Natural killer cell (primary cell): ENCODE measurements at regions of chr18 and their contacts with region 1.

Region 1: DNA sequence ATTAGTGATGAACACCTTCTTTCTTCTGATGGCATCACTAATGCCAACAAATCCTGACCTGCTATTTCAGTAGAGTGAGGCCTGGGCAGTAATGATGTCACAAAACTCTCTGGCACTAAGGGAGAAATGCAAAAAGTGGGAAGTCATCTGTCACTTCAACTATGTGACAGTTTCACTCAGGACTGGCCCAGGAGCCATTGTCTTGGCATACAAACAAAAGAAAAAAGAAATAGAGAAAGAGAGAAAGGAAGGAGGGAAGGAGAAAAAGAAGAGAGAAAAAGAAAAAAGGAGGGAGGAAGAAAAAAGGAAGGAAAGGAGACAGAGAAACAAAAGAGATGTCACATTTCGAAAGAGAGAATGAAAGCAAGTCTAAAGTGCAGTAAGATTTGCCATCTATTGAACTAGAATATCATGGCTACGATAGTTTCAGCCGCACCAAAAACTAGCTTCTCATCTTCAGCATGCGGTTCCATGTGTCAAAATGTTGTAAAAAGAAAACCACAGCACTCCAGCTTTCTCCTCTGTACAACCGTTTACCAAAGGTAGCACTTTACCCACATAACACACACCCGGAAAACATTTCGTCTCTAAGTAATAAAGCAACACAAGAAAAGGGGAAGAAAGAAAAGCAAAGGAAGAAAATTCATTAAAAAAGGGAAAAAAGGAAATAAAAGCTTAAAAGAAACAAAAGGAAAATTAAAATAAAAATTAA is 50.1 kb downstream of the CD226 start:
- DNase-seq: peak in 1 of 2 donors; percentile 80
- ATAC-seq: peak; percentile 27 to 53 (median 46)
- H3K4me3 ChIP-seq: peak overlapping the region; percentile 33
- H3K4me3 Mint-ChIP-seq: peak overlapping the region; percentile 94
- H3K27ac ChIP-seq: peak overlapping the region; percentile 92
- H3K27ac Mint-ChIP-seq: peak overlapping the region; percentile 75 to 93
- H3K4me1 ChIP-seq: peaks cover 46% of the 10 kb centered on the region
- H3K4me1 Mint-ChIP-seq: peaks cover 62 to 76% of the 10 kb centered on the region in 2 donors
- H3K27me3 ChIP-seq: no peaks in the 10 kb centered on the region
- H3K27me3 Mint-ChIP-seq: no peaks in the 10 kb centered on the region
- CTCF ChIP-seq: no peak

Region 2: GRCh38 chr18:69838620-69839411 is 58.7 kb before region 1 on chr18:
- intact Hi-C with region 1: no loop called
- DNase-seq: no peak
- ATAC-seq: peak in 1 of 3 donors; percentile 55
- H3K4me3 ChIP-seq: no peak overlapping the region
- H3K4me3 Mint-ChIP-seq: no peak overlapping the region
- H3K27ac ChIP-seq: no peak overlapping the region
- H3K27ac Mint-ChIP-seq: no peak overlapping the region
- H3K4me1 ChIP-seq: no peaks in the 10 kb centered on the region
- H3K4me1 Mint-ChIP-seq: peaks cover 0 to 11% of the 10 kb centered on the region in 2 donors
- H3K27me3 ChIP-seq: no peaks in the 10 kb centered on the region
- H3K27me3 Mint-ChIP-seq: no peaks in the 10 kb centered on the region
- CTCF ChIP-seq: no peak

Region 3: DNA sequence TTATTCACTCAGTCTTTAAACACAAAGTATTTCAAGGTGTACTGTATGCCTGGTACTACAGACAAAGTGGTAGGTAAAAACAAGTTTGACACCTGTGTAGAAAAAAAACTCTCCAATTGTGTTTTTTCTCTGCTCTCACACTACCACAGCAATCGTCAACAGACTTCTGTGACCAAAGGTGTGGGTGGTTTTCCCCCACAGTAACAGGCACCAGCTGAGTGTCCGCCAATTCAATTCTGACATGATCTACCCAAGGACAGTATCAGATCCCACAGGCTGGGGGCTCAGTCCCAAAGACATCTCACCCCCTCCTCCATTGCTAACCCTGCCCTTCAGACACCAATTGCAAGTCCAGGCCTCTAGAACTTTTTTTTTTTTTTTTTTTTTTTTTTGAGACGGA is 21.1 kb before region 1 on chr18:
- intact Hi-C with region 1: loop called (anchors 1 kb)
- DNase-seq: peak; percentile 37 to 40
- ATAC-seq: peak; percentile 81 to 92 (median 81)
- H3K4me3 ChIP-seq: no peak overlapping the region
- H3K4me3 Mint-ChIP-seq: peak overlapping the region; percentile 43
- H3K27ac ChIP-seq: peak overlapping the region; percentile 36
- H3K27ac Mint-ChIP-seq: peak overlapping the region; percentile 85 to 87
- H3K4me1 ChIP-seq: peaks cover 44% of the 10 kb centered on the region
- H3K4me1 Mint-ChIP-seq: peaks cover 81 to 83% of the 10 kb centered on the region in 2 donors
- H3K27me3 ChIP-seq: no peaks in the 10 kb centered on the region
- H3K27me3 Mint-ChIP-seq: no peaks in the 10 kb centered on the region
- CTCF ChIP-seq: no peak